Vagina (tissue), 2 donors: ENCODE measurements at regions of chr7 and their contacts with region 1.

Region 1: GRCh38 chr7:876167-876967 is at the start of gene GET4:
- DNase-seq: peak in 1 of 2 donors; percentile 95
- H3K4me3 ChIP-seq: peak within 1 kb of the TSS; percentile 82 to 88
- H3K27ac ChIP-seq: peak within 1 kb of the TSS; percentile 91
- H3K4me1 ChIP-seq: peaks cover 43% of the 10 kb centered on the region
- H3K27me3 ChIP-seq: no peaks in the 10 kb centered on the region
- CTCF ChIP-seq: no peak
- POLR2A ChIP-seq: peak in 1 of 2 donors; percentile 77
- total RNA-seq, gene GET4: 35.8 TPM

Region 2: GRCh38 chr7:525740-526139 is 350.6 kb before region 1 on chr7:
- intact Hi-C with region 1: loop called (anchors 2 kb)
- DNase-seq: no peak
- H3K4me3 ChIP-seq: no peak overlapping the region
- H3K27ac ChIP-seq: no peak overlapping the region
- H3K4me1 ChIP-seq: peaks cover 21% of the 10 kb centered on the region
- H3K27me3 ChIP-seq: peaks cover 7% of the 10 kb centered on the region
- CTCF ChIP-seq: no peak
- POLR2A ChIP-seq: no peak

Region 3: DNA sequence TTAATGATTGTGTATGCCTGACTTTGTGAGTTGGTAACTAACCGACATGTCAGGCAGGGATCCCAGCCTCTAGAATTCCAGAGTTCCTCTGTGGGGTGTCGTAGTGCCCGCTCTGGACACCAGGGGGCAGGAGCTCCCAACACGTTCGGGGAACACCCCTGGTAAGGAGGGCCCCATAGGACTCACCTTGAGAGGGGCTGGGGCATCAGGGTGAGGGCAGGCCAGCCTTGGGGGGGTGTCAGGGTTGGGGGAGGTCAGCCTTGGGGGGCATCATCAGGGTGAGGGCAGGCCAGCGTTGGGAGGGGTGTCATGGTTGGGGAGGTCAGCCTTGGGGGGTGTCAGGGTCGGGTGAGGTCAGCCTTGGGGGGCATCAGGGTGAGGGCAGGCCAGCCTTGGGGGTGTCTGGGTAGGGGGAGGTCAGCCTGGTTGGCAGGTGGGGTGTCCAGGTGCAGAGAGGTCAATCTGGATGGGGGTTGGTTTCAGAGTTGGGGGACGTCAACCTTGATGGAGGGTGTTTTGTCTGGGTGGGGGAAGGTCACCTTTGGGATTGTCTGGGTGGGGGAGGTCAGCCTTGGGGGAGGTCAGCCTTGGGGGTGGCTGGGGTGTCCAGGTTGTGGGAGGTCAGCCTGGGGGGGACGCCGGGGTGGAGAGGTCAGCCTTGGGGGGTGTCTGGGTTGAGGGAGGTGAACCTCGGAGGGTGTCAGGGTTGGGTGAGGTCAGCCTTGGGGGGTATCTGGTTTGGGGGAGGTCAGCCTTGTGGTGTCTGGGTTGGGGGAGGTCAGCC is 89.7 kb before region 1 on chr7:
- intact Hi-C with region 1: loop called (anchors 2 kb)
- DNase-seq: no peak
- H3K4me3 ChIP-seq: no peak overlapping the region
- H3K27ac ChIP-seq: no peak overlapping the region
- H3K4me1 ChIP-seq: peaks cover 9% of the 10 kb centered on the region
- H3K27me3 ChIP-seq: no peaks in the 10 kb centered on the region
- CTCF ChIP-seq: peak; percentile 85 to 89 (median 86)
- POLR2A ChIP-seq: no peak

Region 4: DNA sequence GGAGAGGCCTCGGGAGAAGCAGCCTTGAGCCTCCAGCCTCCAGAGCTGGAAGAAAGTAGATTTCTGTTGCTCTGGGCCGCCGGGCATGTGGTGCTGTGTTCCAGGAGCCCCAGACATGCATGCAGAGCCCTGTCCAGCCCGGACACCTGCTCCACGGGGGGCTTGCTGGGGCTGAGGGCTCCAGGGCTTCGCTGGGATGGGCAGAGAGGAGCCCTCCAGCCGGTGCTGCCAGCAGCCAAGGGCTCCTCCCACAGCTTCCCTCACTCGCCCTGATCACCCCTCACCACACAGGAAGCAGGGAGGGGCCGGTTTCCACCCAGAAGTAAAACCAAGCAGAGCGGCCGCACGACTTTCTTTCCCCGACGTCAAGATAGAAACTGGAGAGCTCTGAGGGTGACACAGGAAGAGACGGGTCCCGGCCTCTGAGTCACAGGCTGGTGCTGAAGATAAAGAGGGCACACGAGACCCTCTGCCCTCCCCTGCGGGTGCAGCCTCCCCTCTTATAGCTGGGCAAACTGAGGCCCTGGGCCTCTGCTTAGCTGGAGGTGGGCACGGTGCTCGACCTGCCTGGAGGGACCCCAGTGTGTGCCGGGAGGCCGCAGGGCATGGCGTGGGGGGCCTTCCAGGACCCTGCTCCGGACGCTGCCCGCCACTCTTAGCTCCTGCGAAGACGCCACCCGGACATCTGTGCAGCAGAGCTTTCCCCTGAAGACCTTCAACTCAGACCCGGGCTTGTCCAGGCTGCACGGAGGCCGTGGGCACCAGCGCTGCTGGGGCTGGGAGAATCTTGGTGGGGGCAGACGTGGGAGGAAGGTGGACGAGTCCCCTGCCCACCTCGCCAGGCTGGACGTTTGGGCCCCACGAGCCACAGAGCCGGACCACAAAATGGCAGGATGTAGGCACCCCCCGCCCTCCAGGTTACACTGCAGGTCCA is 47.0 kb after region 1 on chr7:
- intact Hi-C with region 1: no loop called
- DNase-seq: no peak
- H3K4me3 ChIP-seq: peak overlapping the region in 1 of 2 donors; percentile 16
- H3K27ac ChIP-seq: no peak overlapping the region
- H3K4me1 ChIP-seq: peaks cover 3% of the 10 kb centered on the region
- H3K27me3 ChIP-seq: no peaks in the 10 kb centered on the region
- CTCF ChIP-seq: no peak
- POLR2A ChIP-seq: no peak

Region 5: GRCh38 chr7:2214636-2215035 is 1338.3 kb after region 1 on chr7:
- intact Hi-C with region 1: no loop called
- DNase-seq: no peak
- H3K4me3 ChIP-seq: no peak overlapping the region
- H3K27ac ChIP-seq: no peak overlapping the region
- H3K4me1 ChIP-seq: no peaks in the 10 kb centered on the region
- H3K27me3 ChIP-seq: no peaks in the 10 kb centered on the region
- CTCF ChIP-seq: no peak
- POLR2A ChIP-seq: no peak